Heart right ventricle (tissue), 16 donors: ENCODE measurements at regions of chr4 and their contacts with region 1.

Region 1: DNA sequence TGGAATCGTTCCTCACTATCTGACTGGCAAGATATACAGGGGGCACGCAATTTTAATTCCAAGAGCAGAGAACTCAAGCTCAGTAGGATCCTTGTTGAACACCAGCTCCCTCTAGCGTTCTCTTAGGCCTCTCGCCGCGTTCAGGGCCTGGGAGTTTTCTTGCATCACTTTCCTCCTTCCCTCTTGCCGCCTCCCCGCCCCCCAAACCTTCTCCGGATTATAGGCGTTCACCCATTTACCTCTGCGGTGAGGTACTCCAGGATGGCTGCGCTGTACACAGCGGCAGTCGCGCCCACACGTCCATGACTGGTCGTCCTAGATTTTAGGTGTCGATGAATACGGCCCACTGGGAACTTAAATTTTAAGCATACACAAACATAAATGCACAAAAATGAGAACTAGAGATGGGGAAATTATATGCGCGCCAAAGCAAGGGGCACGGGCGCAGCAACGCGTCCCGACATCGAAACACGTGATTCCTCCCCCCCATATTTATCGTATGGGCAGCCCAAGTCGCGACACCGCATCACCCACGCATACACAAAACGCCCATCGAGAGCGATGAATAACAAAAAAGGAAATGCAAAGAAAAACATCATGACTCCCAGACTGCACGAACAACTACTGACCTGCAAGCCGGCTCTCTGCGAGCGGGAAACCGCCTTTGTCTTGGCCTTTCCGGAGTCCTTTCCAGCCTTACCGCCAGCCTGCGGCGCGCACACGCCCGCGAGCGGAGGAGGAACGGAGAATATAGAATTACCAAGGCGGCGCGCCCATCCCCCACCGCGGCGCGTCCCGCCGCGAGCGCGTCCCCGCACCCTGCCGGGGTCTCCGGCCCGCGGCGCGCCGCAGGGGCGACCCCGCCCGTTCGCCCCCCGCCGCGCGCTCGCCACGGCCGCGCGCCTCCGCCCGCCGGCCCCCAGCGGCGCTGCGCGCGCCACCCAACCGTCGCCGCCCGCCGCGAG is 759 bp downstream of the H2AZ1 start:
- DNase-seq: peak; percentile 79 to 90
- ATAC-seq: peak; percentile 10 to 50 (median 40)
- H3K4me3 ChIP-seq: peak overlapping the region; percentile 67 to 95 (median 80)
- H3K27ac ChIP-seq: peak overlapping the region; percentile 14 to 96 (median 88)
- H3K4me1 ChIP-seq: peaks cover 3 to 52% (median 45%) of the 10 kb centered on the region in 9 donors
- H3K27me3 ChIP-seq: no peaks in the 10 kb centered on the region
- CTCF ChIP-seq: peak; percentile 76 to 92 (median 86)

Region 2: GRCh38 chr4:98928131-98928504 is 1021.2 kb before region 1 on chr4:
- intact Hi-C with region 1: no loop called
- DNase-seq: peak; percentile 46 to 71
- ATAC-seq: peak; percentile 60 to 79 (median 68)
- H3K4me3 ChIP-seq: peak overlapping the region; percentile 82 to 97 (median 91)
- H3K27ac ChIP-seq: peak overlapping the region; percentile 79 to 96 (median 93)
- H3K4me1 ChIP-seq: peaks cover 0 to 58% (median 26%) of the 10 kb centered on the region in 9 donors
- H3K27me3 ChIP-seq: no peaks in the 10 kb centered on the region
- CTCF ChIP-seq: no peak

Region 3: GRCh38 chr4:99735822-99736221 is 213.5 kb before region 1 on chr4:
- intact Hi-C with region 1: no loop called
- DNase-seq: no peak
- ATAC-seq: peak in 1 of 8 donors; percentile 20
- H3K4me3 ChIP-seq: no peak overlapping the region
- H3K27ac ChIP-seq: no peak overlapping the region
- H3K4me1 ChIP-seq: peaks cover 0 to 5% (median 0%) of the 10 kb centered on the region in 9 donors
- H3K27me3 ChIP-seq: no peaks in the 10 kb centered on the region
- CTCF ChIP-seq: no peak

Region 4: DNA sequence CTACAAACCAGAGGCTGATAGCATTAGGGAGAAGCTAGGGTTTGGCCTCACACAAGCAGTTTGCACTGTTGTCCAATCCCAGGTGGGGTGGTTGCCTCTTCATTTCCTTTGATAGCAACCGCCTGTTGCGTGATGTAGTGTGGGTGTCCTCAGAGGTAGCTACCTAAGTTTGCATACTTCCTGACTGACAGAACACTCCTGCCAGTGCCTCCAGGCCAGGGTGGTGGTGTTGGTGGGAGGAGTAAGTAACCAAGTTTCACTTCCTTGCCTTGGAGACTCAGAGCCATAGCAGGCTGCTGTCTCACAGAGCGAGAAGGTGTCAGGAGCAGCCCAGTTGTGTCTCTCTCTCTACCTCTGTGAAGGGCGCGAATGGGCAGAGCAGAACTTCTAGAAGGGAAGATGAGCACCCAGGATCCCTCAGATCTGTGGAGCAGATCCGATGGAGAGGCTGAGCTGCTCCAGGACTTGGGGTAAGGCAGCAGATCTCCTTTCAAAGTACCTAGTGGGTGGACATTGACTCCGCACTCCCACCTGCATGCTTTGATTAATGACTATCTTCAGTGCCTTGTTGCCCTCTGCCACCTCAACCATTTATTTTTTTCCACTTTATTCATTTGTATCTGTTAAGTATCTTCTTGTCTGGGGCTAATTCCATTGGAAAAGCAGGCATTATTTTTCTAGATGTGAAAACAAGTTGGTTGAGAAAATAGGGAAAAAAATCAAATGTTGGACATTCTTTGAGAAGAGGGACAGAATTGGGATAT is 132.6 kb before region 1 on chr4 and contains the start of gene DAPP1:
- intact Hi-C with region 1: loop called in 3 of 10 experiments (anchors 5 to 10 kb)
- DNase-seq: peak; percentile 13
- ATAC-seq: peak; percentile 47 to 66 (median 60)
- H3K4me3 ChIP-seq: peak within 1 kb of the TSS in 7 of 10 donors; percentile 2 to 61 (median 29)
- H3K27ac ChIP-seq: peak within 1 kb of the TSS in 4 of 10 donors; percentile 7 to 93 (median 16)
- H3K4me1 ChIP-seq: peaks cover 0 to 62% (median 0%) of the 10 kb centered on the region in 9 donors
- H3K27me3 ChIP-seq: no peaks in the 10 kb centered on the region
- CTCF ChIP-seq: no peak
- total RNA-seq, gene DAPP1: 0.16 to 5.4 (median 0.72) TPM in 9 of 10 donors, not detected in the other

Region 5: DNA sequence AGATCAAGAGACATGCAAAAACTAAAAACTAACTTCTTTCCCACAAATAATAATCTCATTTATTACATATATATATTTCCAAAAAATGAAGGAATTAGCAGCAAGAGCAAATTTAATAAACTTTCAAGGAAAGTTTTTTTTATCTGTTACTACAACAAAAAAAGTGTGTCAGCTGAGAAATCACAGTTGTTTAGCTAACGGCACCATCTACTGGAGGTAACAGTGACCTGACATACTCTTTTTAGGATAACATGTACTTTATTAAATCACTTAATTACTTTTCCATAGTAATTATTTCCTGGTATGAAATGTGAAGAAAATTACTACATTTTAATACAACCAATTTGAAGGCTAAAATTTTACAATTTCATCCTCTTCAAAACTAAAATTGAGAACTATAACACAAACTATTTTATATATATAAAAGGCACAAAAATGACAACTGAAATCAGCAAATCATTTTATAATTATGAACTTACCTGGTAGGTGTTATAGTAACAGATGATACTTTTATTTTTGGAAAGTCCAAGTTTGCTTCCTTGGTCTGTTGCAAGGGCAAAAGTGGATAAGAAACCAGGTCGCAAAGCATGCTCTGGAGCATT is 64.2 kb before region 1 on chr4:
- intact Hi-C with region 1: loop called in 3 of 10 experiments (anchors 5 kb)
- DNase-seq: no peak
- ATAC-seq: no peak
- H3K4me3 ChIP-seq: no peak overlapping the region
- H3K27ac ChIP-seq: no peak overlapping the region
- H3K4me1 ChIP-seq: peaks cover 0 to 23% (median 7%) of the 10 kb centered on the region in 9 donors
- H3K27me3 ChIP-seq: no peaks in the 10 kb centered on the region
- CTCF ChIP-seq: peak in 8 of 9 donors; percentile 26 to 60 (median 51)

Region 6: DNA sequence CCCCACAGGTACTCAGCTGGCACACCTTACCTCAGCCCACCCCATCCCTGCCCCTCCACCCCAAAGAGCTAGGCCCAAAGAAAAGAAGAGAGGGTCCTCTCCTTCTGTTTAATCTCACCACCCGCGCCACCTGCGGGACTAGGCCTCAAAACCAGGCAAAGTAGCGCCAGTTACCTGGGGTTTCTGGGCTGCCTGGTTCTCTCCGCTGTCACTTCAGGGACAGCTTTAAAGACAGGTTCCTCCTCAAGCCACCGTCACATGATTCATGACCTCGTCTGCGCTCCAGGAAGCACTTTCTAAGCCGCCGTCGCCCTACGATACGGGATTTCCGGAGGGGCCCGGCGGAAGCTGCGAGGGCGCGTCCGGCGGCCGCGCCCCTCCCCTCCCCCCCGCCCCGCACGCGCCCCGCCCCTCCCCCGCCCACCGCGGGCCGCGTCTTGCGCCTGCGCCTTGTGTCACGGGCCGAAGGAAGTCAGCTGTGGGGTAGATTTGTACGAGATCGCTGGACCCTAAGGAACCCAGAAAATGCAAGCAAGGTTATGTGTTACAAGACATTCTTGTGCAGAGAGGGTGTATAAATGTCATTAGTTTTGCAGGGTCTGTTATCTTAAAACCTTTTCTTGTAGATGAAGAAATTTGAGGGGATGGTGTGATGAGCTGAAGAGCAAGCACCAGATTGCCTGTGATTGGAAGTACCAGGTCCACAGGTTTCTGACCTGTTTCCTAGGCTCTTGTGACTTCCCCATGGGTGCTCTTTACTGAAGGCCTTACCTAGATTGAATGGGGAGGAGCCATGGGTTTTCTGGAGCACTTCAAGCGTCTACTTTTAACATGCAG is 54.9 kb before region 1 on chr4 and contains the start of gene LAMTOR3:
- intact Hi-C with region 1: loop called in 8 of 10 experiments (anchors 2 to 5 kb)
- DNase-seq: peak; percentile 89 to 92
- ATAC-seq: peak; percentile 98 to 100 (median 99)
- H3K4me3 ChIP-seq: peak within 1 kb of the TSS; percentile 65 to 94 (median 86)
- H3K27ac ChIP-seq: peak within 1 kb of the TSS; percentile 50 to 93 (median 82)
- H3K4me1 ChIP-seq: peaks cover 5 to 49% (median 34%) of the 10 kb centered on the region in 9 donors
- H3K27me3 ChIP-seq: no peaks in the 10 kb centered on the region
- CTCF ChIP-seq: no peak
- total RNA-seq, gene LAMTOR3: 31.2 to 37.4 (median 35.5) TPM

Region 7: DNA sequence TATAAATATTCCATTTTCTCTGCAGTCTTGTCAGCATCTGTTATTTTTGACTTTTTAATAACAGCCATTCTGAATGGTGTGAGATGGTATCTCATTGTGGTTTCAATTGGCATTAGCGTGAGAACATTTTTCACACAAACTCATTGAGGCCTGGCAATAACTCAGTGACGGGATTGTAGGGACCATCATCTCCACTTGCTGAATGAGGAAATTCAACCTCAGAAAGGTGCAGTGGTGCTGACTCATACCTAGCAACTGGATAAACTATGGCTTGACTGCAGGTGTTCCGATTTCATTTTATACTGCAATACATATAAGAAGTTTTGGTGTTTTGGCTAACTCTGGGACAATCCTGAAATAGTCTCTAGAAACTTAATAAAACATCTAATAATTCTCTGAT is 329.3 kb after region 1 on chr4:
- intact Hi-C with region 1: no loop called
- DNase-seq: no peak
- ATAC-seq: no peak
- H3K4me3 ChIP-seq: no peak overlapping the region
- H3K27ac ChIP-seq: no peak overlapping the region
- H3K4me1 ChIP-seq: no peaks in the 10 kb centered on the region
- H3K27me3 ChIP-seq: no peaks in the 10 kb centered on the region
- CTCF ChIP-seq: no peak

Region 8: GRCh38 chr4:100736641-100737451 is 787.5 kb after region 1 on chr4:
- intact Hi-C with region 1: no loop called
- DNase-seq: peak in 1 of 2 donors; percentile 34
- ATAC-seq: peak; percentile 53 to 92 (median 76)
- H3K4me3 ChIP-seq: no peak overlapping the region
- H3K27ac ChIP-seq: peak overlapping the region in 9 of 10 donors; percentile 20 to 63 (median 52)
- H3K4me1 ChIP-seq: peaks cover 0 to 34% (median 11%) of the 10 kb centered on the region in 9 donors
- H3K27me3 ChIP-seq: no peaks in the 10 kb centered on the region
- CTCF ChIP-seq: no peak